Caco-2 (cell line): ENCODE measurements at regions of chr5 and their contacts with region 1.

Region 1: GRCh38 chr5:109688971-109689739 is 572 bp upstream of the MAN2A1 start:
- DNase-seq: peak; percentile 89 to 92
- H3K4me3 ChIP-seq: peak overlapping the region; percentile 86
- H3K4me3 Mint-ChIP-seq: peak overlapping the region; percentile 94
- H3K27ac Mint-ChIP-seq: peak overlapping the region; percentile 98
- H3K4me1 ChIP-seq: 0 out of 2 replicates have a peak, but pooled peaks cover 6% of the 10 kb centered on the region
- H3K4me1 Mint-ChIP-seq: peaks cover 15% of the 10 kb centered on the region
- H3K27me3 ChIP-seq: no peaks in the 10 kb centered on the region
- H3K27me3 Mint-ChIP-seq: no peaks in the 10 kb centered on the region
- CTCF ChIP-seq: no peak

Region 2: GRCh38 chr5:108748401-108749127 is 940.6 kb before region 1 on chr5:
- CTCF ChIA-PET with region 1: no interaction called
- POLR2A ChIA-PET with region 1: interaction called, 4 read pairs
- intact Hi-C with region 1: loop called (anchors 10 kb)
- DNase-seq: peak; percentile 99 to 100
- H3K4me3 ChIP-seq: peak overlapping the region; percentile 98
- H3K4me3 Mint-ChIP-seq: peak overlapping the region; percentile 90
- H3K27ac Mint-ChIP-seq: peak overlapping the region; percentile 93
- H3K4me1 ChIP-seq: peaks cover 24% of the 10 kb centered on the region
- H3K4me1 Mint-ChIP-seq: peaks cover 23% of the 10 kb centered on the region
- H3K27me3 ChIP-seq: no peaks in the 10 kb centered on the region
- H3K27me3 Mint-ChIP-seq: no peaks in the 10 kb centered on the region
- CTCF ChIP-seq: no peak

Region 3: DNA sequence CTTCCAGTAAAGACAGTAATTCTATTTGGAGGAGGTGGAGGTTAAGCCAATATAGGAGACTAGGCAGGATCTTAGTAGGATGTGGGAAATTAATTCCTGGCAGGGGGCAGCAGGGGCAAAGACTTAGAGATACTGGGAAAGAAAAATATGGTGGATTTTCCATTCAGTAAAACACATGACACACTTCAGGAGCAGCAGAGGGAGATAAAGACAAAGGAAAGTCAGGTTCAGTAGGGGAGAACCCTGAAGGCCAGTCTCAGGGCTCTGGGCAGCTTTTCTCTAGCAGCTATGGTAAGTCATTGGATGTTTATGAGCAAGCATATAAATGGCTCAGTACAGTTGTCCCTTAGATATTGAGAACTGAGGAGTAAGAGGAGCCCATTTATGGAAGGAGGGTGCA is 384.8 kb before region 1 on chr5:
- CTCF ChIA-PET with region 1: no interaction called
- POLR2A ChIA-PET with region 1: no interaction called
- intact Hi-C with region 1: loop called (anchors 1 kb)
- DNase-seq: no peak
- H3K4me3 ChIP-seq: no peak overlapping the region
- H3K4me3 Mint-ChIP-seq: no peak overlapping the region
- H3K27ac Mint-ChIP-seq: no peak overlapping the region
- H3K4me1 ChIP-seq: no peaks in the 10 kb centered on the region
- H3K4me1 Mint-ChIP-seq: no peaks in the 10 kb centered on the region
- H3K27me3 ChIP-seq: no peaks in the 10 kb centered on the region
- H3K27me3 Mint-ChIP-seq: peaks cover under 1% of the 10 kb centered on the region
- CTCF ChIP-seq: peak in 1 of 2 experiments; percentile 18

Region 4: DNA sequence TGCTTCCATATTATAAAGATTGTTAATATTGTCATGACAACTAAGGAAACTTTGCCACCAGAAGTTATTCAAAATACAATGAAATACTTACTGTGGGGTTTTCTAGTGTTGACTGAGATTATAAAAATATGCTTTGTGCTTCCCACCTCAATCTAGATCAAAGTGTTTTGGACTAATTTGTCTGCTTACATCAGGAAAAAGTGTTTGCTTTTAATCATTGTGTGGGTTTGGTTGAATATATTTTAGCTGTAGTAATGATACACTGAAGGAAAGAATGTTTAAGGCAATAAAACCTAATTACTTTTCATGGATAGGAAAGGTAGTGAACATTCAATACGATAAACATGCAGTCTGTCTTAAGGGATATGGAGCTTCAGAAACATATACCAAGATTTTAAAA is 29.3 kb before region 1 on chr5:
- CTCF ChIA-PET with region 1: no interaction called
- POLR2A ChIA-PET with region 1: no interaction called
- intact Hi-C with region 1: loop called (anchors 2 kb)
- DNase-seq: peak in 1 of 2 experiments; percentile 7
- H3K4me3 ChIP-seq: no peak overlapping the region
- H3K4me3 Mint-ChIP-seq: no peak overlapping the region
- H3K27ac Mint-ChIP-seq: peak overlapping the region; percentile 45
- H3K4me1 ChIP-seq: 0 out of 2 replicates have a peak, but pooled peaks cover 5% of the 10 kb centered on the region
- H3K4me1 Mint-ChIP-seq: no peaks in the 10 kb centered on the region
- H3K27me3 ChIP-seq: no peaks in the 10 kb centered on the region
- H3K27me3 Mint-ChIP-seq: no peaks in the 10 kb centered on the region
- CTCF ChIP-seq: no peak

Region 5: GRCh38 chr5:109844148-109844547 is 155.0 kb after region 1 on chr5:
- CTCF ChIA-PET with region 1: no interaction called
- POLR2A ChIA-PET with region 1: no interaction called
- intact Hi-C with region 1: loop called (anchors 1 kb)
- DNase-seq: no peak
- H3K4me3 ChIP-seq: no peak overlapping the region
- H3K4me3 Mint-ChIP-seq: no peak overlapping the region
- H3K27ac Mint-ChIP-seq: no peak overlapping the region
- H3K4me1 ChIP-seq: no peaks in the 10 kb centered on the region
- H3K4me1 Mint-ChIP-seq: no peaks in the 10 kb centered on the region
- H3K27me3 ChIP-seq: no peaks in the 10 kb centered on the region
- H3K27me3 Mint-ChIP-seq: no peaks in the 10 kb centered on the region
- CTCF ChIP-seq: peak; percentile 43 to 51

Region 6: GRCh38 chr5:110940136-110940535 is 1251.0 kb after region 1 on chr5:
- CTCF ChIA-PET with region 1: no interaction called
- POLR2A ChIA-PET with region 1: no interaction called
- intact Hi-C with region 1: no loop called
- DNase-seq: no peak
- H3K4me3 ChIP-seq: no peak overlapping the region
- H3K4me3 Mint-ChIP-seq: no peak overlapping the region
- H3K27ac Mint-ChIP-seq: no peak overlapping the region
- H3K4me1 ChIP-seq: no peaks in the 10 kb centered on the region
- H3K4me1 Mint-ChIP-seq: no peaks in the 10 kb centered on the region
- H3K27me3 ChIP-seq: no peaks in the 10 kb centered on the region
- H3K27me3 Mint-ChIP-seq: peaks cover 12% of the 10 kb centered on the region
- CTCF ChIP-seq: no peak